ENCODE measurements at regions of chr4 and their contacts with region 1.

Region 1: DNA sequence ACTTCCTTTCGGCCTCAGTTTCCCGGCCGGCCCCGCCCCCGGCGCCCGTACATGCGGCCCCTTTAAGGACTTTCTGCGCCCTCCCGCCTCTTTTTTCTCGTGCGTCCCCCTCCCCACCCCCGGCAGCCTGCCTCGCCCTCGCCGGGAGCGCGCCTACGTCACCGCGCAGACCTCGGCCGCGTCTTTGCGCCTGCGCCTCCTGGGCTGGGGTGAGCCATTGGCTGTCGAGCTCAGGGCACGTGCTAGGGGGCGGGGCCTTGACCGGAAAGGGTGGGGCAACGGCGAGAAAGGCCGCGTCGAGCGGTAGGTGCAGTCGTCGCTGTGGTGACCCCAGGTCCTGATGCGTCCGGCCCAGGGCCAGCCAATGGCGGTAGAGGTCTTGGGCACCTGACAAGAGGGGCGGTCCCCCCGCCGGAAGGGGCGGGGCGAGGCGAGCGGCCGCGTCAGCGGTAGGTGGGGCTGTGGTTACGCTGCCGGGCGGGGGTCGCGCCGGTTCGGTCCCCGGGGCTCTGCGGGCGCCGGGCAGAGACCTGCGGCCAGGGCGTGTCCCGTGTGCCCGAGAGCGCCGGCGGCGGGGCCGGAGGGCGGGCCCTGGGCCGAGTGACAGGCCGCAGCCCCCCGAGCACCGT is at the start of gene UVSSA:
- DNase-seq: peak; percentile 100
- H3K4me3 ChIP-seq: peak within 1 kb of the TSS; percentile 88
- H3K27ac ChIP-seq: peak within 1 kb of the TSS; percentile 100
- H3K4me1 ChIP-seq: peaks cover 57% of the 10 kb centered on the region
- H3K27me3 ChIP-seq: no peaks in the 10 kb centered on the region
- CTCF ChIP-seq: no peak
- total RNA-seq, gene UVSSA: 5.9 TPM

Region 2: DNA sequence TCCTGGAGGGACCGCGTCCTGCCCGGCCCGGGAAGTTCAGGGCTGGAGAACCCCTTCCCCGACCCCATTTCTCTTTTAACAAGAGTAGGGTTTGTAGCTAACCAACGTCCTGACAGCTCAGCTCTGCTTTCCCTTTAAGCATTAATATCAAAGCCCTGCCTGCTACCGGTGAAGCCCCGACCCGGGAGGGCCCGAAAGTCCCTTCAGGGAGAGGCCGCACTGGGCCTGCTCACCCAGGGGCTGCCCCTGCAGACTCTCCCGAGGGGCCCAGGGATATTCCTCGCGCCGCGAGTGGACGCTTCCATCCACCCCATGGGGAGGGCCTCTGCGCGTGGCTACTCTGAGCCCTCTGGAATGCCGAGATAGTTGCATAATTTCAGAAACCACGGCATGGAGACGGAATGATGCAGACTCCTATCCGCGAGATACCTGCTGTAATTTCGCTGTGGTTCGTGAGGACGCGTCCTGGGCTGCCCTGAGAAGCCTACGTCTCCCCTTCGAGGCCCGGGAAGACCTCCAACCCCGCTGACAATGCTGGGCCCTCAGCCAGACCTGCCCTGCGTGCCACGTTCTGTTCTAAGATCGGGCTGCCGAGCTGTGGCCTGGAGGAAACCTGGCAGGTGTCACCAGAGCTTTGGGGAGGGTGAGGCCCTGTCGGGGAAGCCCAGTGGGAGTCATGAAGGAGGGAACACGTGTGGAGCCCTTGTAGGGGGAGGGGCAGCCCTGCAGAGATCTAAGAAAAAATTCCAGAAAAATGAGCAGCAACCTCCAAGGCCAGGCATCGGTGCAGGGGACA is 97.0 kb before region 1 on chr4:
- intact Hi-C with region 1: loop called (anchors 10 kb)
- DNase-seq: no peak
- H3K4me3 ChIP-seq: peak overlapping the region; percentile 74
- H3K27ac ChIP-seq: peak overlapping the region; percentile 99
- H3K4me1 ChIP-seq: peaks cover 62% of the 10 kb centered on the region
- H3K27me3 ChIP-seq: no peaks in the 10 kb centered on the region
- CTCF ChIP-seq: no peak

Measured in left ventricle myocardium inferior (tissue), 1 donor.